ENCODE measurements at regions of chr5 and their contacts with region 1.

Region 1: GRCh38 chr5:145681686-145682085 is 153.5 kb downstream of the PRELID2 start:
- DNase-seq: no peak
- H3K4me3 ChIP-seq: no peak overlapping the region
- H3K27ac ChIP-seq: peak overlapping the region in 3 of 4 donors; percentile 66 to 83 (median 80)
- H3K4me1 ChIP-seq: peaks cover 0 to 42% (median 19%) of the 10 kb centered on the region in 4 donors
- H3K27me3 ChIP-seq: no peaks in the 10 kb centered on the region
- CTCF ChIP-seq: peak; percentile 29 to 60 (median 43)
- EP300 ChIP-seq: no peak
- POLR2A ChIP-seq: no peak

Region 2: GRCh38 chr5:145203193-145203592 is 478.5 kb before region 1 on chr5:
- intact Hi-C with region 1: no loop called
- DNase-seq: no peak
- H3K4me3 ChIP-seq: no peak overlapping the region
- H3K27ac ChIP-seq: no peak overlapping the region
- H3K4me1 ChIP-seq: no peaks in the 10 kb centered on the region
- H3K27me3 ChIP-seq: no peaks in the 10 kb centered on the region
- CTCF ChIP-seq: no peak
- EP300 ChIP-seq: no peak
- POLR2A ChIP-seq: no peak

Region 3: GRCh38 chr5:145834917-145835847 is 153.5 kb after region 1 on chr5 and contains the start of gene PRELID2:
- intact Hi-C with region 1: loop called (anchors 5 kb)
- DNase-seq: peak; percentile 92
- H3K4me3 ChIP-seq: peak within 1 kb of the TSS; percentile 53 to 82 (median 68)
- H3K27ac ChIP-seq: peak within 1 kb of the TSS; percentile 70 to 83 (median 80)
- H3K4me1 ChIP-seq: peaks cover 0 to 30% (median 27%) of the 10 kb centered on the region in 4 donors
- H3K27me3 ChIP-seq: no peaks in the 10 kb centered on the region
- CTCF ChIP-seq: no peak
- EP300 ChIP-seq: no peak
- POLR2A ChIP-seq: peak; percentile 14 to 39
- total RNA-seq, gene PRELID2: 7.1 to 19.9 (median 12.5) TPM

Measured in sigmoid colon (tissue), 7 donors.